Activated naive CD8-positive, alpha-beta T cell treated with anti-CD3 and anti-CD28 coated beads, Interleukin-2, amount 10 ng/mL, durations not matched to agents 7 days and 5 days (primary cell): ENCODE measurements at regions of chr2 and their contacts with region 1.

Region 1: DNA sequence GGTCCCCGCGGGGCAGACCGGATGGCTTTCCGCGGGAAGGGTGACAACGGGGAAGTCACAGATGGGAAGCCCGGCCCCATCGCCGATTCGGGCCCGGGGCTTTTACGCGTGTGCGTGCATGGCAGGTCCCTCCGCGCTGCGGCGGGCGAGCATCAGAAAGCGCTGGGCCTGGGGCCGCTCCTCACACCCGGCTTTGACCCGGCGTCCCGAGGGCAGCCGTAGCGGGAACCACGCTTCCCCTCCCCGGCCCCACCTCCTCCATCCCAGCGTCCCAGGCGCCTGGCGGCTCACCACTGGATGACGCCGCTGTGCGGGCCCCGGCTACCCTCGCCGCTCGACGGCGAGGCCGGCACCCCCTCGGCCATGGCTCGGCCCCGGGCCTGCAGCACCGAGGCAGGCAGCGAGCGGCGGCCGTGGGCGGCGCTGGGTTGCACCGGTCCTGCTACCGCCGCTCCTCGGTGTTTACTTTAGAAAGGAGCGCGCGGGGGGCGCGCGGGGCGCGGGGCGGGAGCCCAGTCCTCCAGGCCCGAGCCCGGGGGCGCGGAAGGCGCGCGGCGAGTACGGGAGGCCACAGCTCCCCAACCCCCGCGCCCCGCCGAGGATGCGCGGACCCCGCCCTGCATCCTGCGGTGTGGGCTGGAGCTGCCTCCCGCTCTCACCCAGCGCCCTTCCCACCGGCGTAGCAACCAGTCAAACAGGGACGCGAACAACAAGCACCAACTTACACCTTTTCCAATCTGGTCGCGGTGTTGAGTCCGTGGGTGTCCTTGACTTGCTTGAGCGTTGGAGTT is 806 bp downstream of the RFX8 start:
- DNase-seq: peak; percentile 74
- ATAC-seq: peak; percentile 57
- H3K4me3 Mint-ChIP-seq: peak overlapping the region; percentile 84
- H3K27ac Mint-ChIP-seq: peak overlapping the region; percentile 95
- H3K4me1 Mint-ChIP-seq: peaks cover 39% of the 10 kb centered on the region
- H3K27me3 Mint-ChIP-seq: no peaks in the 10 kb centered on the region

Region 2: GRCh38 chr2:101486258-101486701 is 12.2 kb after region 1 on chr2:
- POLR2A ChIA-PET with region 1: interaction called, 10 read pairs
- DNase-seq: no peak
- ATAC-seq: peak; percentile 47
- H3K4me3 Mint-ChIP-seq: no peak overlapping the region
- H3K27ac Mint-ChIP-seq: peak overlapping the region; percentile 2
- H3K4me1 Mint-ChIP-seq: peaks cover 20% of the 10 kb centered on the region
- H3K27me3 Mint-ChIP-seq: no peaks in the 10 kb centered on the region